T-cell (primary cell): ENCODE measurements at regions of chr15 and their contacts with region 1.

Region 1: DNA sequence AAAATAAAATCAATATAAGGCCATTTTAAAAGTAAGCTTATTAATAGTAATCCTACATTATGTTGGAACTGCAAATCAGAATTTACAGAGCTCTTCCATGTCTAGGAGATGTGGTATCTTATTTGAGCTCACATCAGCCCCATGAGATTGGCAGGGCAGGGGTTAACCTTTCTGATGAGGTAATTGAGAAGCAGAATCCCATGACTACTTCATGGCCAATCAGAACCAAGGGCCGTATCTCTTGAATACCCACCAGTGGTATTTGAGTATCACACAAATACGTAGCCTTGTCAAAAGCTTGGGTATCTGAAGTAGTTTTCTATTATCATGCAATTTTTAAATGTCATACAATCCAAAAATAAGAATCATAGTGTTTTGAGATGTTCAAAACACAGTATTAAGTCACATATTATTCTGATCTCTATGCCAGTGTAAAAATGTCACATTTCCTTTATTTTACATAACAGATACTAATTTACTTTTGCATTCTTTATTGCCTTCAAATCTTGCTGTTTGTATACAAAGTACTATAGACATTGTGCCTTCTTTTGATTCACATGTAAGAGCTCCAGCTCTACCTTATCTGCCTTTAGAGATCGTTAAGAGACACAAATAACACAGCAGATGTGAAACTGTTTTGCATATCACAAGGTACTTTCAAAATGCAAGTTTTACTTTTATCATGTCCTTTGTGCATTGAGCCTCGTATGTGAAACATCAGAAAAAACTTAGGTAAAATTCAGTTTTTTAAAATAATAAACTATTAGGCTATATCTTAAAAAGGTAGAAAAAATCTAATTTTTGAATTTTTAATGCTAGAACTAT is 251.7 kb upstream of the GOLGA6L4 start:
- DNase-seq: no peak
- ATAC-seq: no peak
- H3K4me3 ChIP-seq: no peak overlapping the region
- H3K4me3 Mint-ChIP-seq: no peak overlapping the region
- H3K27ac ChIP-seq: no peak overlapping the region
- H3K27ac Mint-ChIP-seq: no peak overlapping the region
- H3K4me1 ChIP-seq: no peaks in the 10 kb centered on the region
- H3K4me1 Mint-ChIP-seq: no peaks in the 10 kb centered on the region
- H3K27me3 ChIP-seq: peaks cover 0 to 2% of the 10 kb centered on the region in 2 experiments
- H3K27me3 Mint-ChIP-seq: no peaks in the 10 kb centered on the region

Region 2: DNA sequence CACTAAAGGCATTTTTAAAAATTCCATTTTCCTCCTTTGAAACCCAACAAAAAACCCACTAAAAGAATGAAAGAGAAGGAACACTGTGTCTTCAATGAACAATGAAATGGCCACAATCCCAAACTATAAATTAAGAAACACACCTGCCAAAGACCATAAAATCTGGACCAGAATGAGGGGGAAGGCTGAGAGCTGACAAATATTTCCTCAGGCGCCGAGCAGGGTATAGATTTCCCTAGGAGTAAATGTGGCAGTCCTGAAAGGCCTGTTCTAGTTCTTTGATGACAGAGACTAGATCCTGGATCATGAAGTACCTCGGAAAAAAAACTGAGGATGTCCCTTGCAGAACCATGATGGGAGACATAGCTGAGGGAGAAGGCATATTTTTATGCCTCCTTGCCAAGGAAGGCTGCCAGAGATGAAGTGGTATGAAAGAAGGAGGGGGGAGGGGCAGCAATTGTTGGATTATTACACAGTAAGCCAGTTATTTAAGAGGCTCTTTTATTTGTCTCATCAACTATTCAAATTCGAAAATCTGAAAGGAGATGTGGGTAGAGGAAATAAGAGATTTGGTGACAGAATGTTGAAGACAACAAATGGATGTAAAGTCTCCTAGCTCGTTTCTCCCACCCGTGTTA is 23.5 kb before region 1 on chr15:
- CTCF ChIA-PET with region 1: no interaction called
- POLR2A ChIA-PET with region 1: interaction called in 1 of 2 experiments, 11 read pairs
- DNase-seq: no peak
- ATAC-seq: no peak
- H3K4me3 ChIP-seq: no peak overlapping the region
- H3K4me3 Mint-ChIP-seq: no peak overlapping the region
- H3K27ac ChIP-seq: no peak overlapping the region
- H3K27ac Mint-ChIP-seq: no peak overlapping the region
- H3K4me1 ChIP-seq: no peaks in the 10 kb centered on the region
- H3K4me1 Mint-ChIP-seq: no peaks in the 10 kb centered on the region
- H3K27me3 ChIP-seq: peaks cover 0 to 7% of the 10 kb centered on the region in 2 experiments
- H3K27me3 Mint-ChIP-seq: peaks cover 7 to 10% of the 10 kb centered on the region in 2 donors

Region 3: GRCh38 chr15:83999396-84000135 is 15.7 kb after region 1 on chr15:
- CTCF ChIA-PET with region 1: no interaction called
- POLR2A ChIA-PET with region 1: no interaction called
- DNase-seq: no peak
- ATAC-seq: no peak
- H3K4me3 ChIP-seq: no peak overlapping the region
- H3K4me3 Mint-ChIP-seq: no peak overlapping the region
- H3K27ac ChIP-seq: no peak overlapping the region
- H3K27ac Mint-ChIP-seq: no peak overlapping the region
- H3K4me1 ChIP-seq: no peaks in the 10 kb centered on the region
- H3K4me1 Mint-ChIP-seq: no peaks in the 10 kb centered on the region
- H3K27me3 ChIP-seq: peaks cover 2 to 3% of the 10 kb centered on the region in 2 experiments
- H3K27me3 Mint-ChIP-seq: peaks cover 3 to 10% of the 10 kb centered on the region in 2 donors